Sigmoid colon (tissue), 7 donors: ENCODE measurements at regions of chr1 and their contacts with region 1.

Region 1: GRCh38 chr1:44616991-44617702 is 57.1 kb downstream of the TMEM53 start:
- DNase-seq: peak; percentile 78
- H3K4me3 ChIP-seq: peak overlapping the region; percentile 21 to 53 (median 46)
- H3K27ac ChIP-seq: peak overlapping the region in 3 of 4 donors; percentile 14 to 66 (median 45)
- H3K4me1 ChIP-seq: peaks cover 0 to 34% (median 18%) of the 10 kb centered on the region in 4 donors
- H3K27me3 ChIP-seq: peaks cover 0 to 8% (median 0%) of the 10 kb centered on the region in 3 donors
- CTCF ChIP-seq: no peak
- EP300 ChIP-seq: no peak
- POLR2A ChIP-seq: no peak

Region 2: GRCh38 chr1:43137445-43138052 is 1479.6 kb before region 1 on chr1:
- intact Hi-C with region 1: no loop called
- DNase-seq: no peak
- H3K4me3 ChIP-seq: no peak overlapping the region
- H3K27ac ChIP-seq: no peak overlapping the region
- H3K4me1 ChIP-seq: no peaks in the 10 kb centered on the region
- H3K27me3 ChIP-seq: no peaks in the 10 kb centered on the region
- CTCF ChIP-seq: no peak
- EP300 ChIP-seq: no peak
- POLR2A ChIP-seq: no peak

Region 3: GRCh38 chr1:44645476-44646244 is 28.5 kb after region 1 on chr1:
- intact Hi-C with region 1: loop called (anchors 2 kb)
- DNase-seq: peak; percentile 86
- H3K4me3 ChIP-seq: peak overlapping the region in 1 of 4 donors; percentile 2
- H3K27ac ChIP-seq: peak overlapping the region; percentile 86 to 92 (median 90)
- H3K4me1 ChIP-seq: peaks cover 0 to 80% (median 64%) of the 10 kb centered on the region in 4 donors
- H3K27me3 ChIP-seq: no peaks in the 10 kb centered on the region
- CTCF ChIP-seq: no peak
- EP300 ChIP-seq: peak in 1 of 4 donors; percentile 3
- POLR2A ChIP-seq: no peak